GM10248 (cell line): ENCODE measurements at regions of chr14 and their contacts with region 1.

Region 1: DNA sequence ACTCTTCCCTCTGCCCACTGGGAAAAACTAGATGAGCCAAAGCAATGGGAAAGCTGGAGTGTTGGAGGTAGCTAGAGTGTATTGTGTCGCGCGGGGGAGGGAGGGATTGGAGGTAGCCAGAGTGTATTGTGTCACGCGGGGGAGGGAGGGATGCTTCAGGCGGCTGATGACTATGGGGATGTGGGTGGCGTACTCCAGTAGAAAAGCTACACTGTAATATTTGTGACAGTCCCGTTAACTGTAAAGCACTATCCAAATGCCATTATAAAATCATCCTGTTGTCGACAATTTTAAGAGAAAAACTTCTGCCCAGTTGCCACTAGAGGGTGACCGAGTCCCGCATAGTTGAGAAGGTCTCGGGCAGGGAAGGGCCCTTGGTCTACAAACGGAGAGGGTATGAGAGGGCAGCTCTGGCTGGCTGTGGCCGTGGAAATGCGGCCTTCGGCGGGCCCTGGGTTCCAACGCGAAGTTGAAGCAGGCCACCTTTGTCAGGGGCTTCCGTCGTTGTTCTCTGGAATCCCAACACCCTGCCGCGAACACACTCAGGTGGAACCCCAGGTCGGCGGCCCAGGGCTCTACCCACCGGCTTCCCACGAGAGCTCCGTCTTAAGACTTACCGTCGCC is 15.1 kb upstream of the PLEK2 start:
- DNase-seq: peak; percentile 86
- CTCF ChIP-seq: peak; percentile 83

Region 2: GRCh38 chr14:67405771-67406170 is 21.3 kb before region 1 on chr14:
- CTCF ChIA-PET with region 1: interaction called, 17 read pairs
- POLR2A ChIA-PET with region 1: no interaction called
- DNase-seq: no peak
- CTCF ChIP-seq: no peak

Region 3: DNA sequence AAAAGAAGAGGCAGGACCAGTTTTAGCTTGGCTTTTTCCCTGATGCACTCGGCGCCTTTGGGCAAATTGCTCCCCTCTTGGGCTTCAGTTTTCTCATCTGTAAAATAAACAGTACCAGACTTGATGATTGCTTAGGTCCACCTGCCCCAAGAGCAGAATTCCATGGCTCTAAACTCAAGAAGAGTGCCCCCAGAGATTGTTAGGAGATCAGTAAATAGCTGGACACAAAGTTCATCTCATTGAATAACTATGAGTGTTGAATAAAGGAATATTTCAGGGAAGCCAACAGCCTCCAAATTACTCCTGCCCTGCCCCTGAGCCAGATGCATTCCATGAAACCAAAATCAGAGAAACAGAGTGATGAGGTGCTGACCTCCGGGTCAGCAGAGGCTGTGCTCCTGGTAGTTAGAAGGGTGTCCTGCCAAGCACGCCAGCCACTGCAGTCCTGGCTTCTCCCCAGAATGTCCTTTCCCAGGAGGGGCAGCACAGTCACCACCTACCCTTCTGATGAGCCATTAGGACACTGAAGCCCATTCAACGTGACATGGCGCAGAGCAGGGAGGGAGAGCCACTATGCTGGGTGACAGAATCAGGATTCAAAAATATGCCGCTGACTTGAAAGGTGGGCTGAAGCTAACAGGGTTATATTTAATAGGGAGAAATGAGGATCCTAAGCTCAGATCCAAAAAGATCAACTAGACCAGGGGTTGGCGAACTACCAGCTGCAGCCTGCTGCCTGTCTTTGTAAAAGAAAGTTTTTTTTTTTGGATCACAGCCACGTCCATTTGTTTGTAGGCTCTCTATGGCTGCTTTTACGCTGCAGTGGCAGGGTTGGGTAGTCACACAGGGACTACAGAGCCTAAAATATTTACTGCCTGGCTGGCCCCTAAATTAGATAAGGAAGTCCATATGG is 19.3 kb after region 1 on chr14:
- CTCF ChIA-PET with region 1: interaction called, 69 read pairs
- POLR2A ChIA-PET with region 1: no interaction called
- DNase-seq: no peak
- CTCF ChIP-seq: no peak

Region 4: GRCh38 chr14:67514650-67515385 is 87.7 kb after region 1 on chr14:
- CTCF ChIA-PET with region 1: interaction called, 17 read pairs
- POLR2A ChIA-PET with region 1: no interaction called
- DNase-seq: peak; percentile 62
- CTCF ChIP-seq: no peak

Region 5: GRCh38 chr14:67571272-67571850 is 144.3 kb after region 1 on chr14:
- CTCF ChIA-PET with region 1: interaction called, 695 read pairs
- POLR2A ChIA-PET with region 1: interaction called, 3 read pairs
- DNase-seq: peak; percentile 81
- CTCF ChIP-seq: peak; percentile 97

Region 6: GRCh38 chr14:67666750-67667449 is 239.8 kb after region 1 on chr14:
- CTCF ChIA-PET with region 1: interaction called, 42 read pairs
- POLR2A ChIA-PET with region 1: no interaction called
- DNase-seq: peak; percentile 69
- CTCF ChIP-seq: peak; percentile 67

Region 7: DNA sequence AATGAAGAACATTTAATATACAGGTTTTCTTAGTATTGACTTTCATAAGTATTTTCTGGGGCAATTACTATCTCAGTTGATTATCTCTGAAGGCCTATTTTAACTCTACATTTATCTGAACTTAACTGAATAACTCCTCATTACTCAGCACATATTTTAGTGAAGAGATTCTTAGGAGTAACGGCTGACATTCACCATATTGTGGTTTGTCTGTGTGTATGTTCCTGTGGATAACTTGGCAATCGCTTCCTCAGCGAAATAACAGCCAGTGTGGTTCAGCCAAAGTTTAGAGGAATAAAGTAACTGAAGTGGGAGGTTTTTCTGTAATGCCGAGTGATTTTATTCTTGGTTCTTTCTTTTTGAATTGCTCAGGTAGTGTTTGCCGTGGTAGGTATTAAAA is 560.5 kb after region 1 on chr14:
- CTCF ChIA-PET with region 1: no interaction called
- POLR2A ChIA-PET with region 1: no interaction called
- DNase-seq: no peak
- CTCF ChIP-seq: no peak